Common myeloid progenitor, CD34-positive (primary cell): ENCODE measurements at regions of chr5 and their contacts with region 1.

Region 1: DNA sequence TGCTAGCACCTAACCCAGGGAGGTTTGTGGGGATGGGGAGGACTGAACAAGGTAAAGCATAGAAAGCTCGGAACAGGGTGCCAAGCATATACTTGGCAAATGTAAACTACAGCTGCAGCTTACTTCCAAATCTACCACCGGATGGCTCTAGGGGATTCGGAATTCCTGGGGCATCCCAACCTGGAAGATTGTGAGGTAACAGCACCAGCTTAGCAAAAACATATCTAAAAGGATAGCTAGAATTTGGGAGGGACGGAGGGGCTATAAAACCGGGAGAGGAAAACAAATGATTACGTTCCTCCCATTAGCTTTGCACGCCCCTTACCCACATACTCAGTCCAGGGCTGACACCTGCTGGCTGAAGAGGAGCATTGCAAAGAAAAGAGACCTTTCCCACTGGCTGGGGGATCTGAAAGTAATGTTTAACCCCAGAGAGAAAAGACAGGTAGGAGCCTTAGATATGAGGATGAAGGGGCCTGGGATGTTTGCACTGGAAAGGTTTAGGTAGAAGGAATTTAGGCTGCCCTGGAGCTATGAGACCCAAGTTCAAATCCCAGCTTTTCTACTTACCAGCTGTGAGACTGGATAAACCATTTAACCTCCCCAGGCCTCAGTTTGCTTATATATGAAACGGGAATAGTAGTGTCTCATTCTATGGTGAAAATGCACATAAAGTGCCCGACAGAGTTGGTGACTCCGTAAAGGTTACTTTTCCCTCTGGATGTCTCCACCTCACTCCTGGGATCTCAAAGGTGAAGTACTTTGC is 73.6 kb downstream of the FAM114A2 start:
- DNase-seq: peak; percentile 52 to 76 (median 63)
- H3K4me3 ChIP-seq: no peak overlapping the region
- H3K27ac ChIP-seq: no peak overlapping the region
- H3K4me1 ChIP-seq: peaks cover 0 to 14% (median 9%) of the 10 kb centered on the region in 4 experiments
- H3K27me3 ChIP-seq: peaks cover 0 to 8% (median 0%) of the 10 kb centered on the region in 5 experiments

Region 2: DNA sequence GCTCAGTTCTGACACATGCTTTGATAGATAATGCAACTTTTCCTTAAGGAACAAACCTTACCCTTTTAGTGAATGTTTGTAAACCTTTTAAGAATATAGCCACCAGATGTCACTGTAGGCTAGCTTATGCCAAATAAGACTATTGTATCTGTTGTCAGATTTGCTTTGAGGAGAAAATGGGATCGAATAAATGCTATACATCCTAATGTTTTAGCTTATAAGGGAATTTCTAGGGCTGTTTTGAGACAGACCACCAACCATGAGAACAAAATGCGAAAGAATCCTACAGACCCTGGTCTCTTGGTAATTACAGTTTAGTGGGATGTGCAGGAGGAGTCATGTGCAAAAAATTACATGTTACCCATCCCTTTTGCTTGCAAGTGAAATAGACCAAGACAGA is 1432.3 kb before region 1 on chr5:
- CTCF ChIA-PET with region 1: interaction called, 39 read pairs
- POLR2A ChIA-PET with region 1: no interaction called
- DNase-seq: peak; percentile 45 to 67 (median 60)
- H3K4me3 ChIP-seq: no peak overlapping the region
- H3K27ac ChIP-seq: no peak overlapping the region
- H3K4me1 ChIP-seq: no peaks in the 10 kb centered on the region
- H3K27me3 ChIP-seq: no peaks in the 10 kb centered on the region

Region 3: DNA sequence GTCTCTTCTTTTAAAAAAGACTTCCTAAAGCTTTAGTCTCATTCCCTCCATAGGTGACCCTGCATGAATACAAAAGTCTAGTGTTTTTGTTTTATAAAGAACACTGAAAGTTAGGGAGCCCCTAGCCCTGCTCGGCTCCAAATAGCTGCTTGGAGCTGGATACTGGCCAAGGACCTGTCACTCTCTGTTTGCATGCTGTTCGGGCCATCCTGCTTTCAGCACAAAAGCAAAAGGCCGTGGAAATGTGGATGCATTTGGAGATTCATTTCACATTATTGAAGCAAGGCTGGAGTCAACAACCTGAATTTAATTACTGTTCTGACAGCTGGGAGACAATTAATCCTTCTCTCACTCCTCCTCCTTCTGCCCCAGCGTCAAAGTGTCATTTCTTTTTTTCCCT is 1408.3 kb before region 1 on chr5:
- CTCF ChIA-PET with region 1: interaction called, 11 read pairs
- POLR2A ChIA-PET with region 1: no interaction called
- DNase-seq: no peak
- H3K4me3 ChIP-seq: no peak overlapping the region
- H3K27ac ChIP-seq: no peak overlapping the region
- H3K4me1 ChIP-seq: no peaks in the 10 kb centered on the region
- H3K27me3 ChIP-seq: peaks cover 0 to 2% (median 0%) of the 10 kb centered on the region in 5 experiments

Region 4: DNA sequence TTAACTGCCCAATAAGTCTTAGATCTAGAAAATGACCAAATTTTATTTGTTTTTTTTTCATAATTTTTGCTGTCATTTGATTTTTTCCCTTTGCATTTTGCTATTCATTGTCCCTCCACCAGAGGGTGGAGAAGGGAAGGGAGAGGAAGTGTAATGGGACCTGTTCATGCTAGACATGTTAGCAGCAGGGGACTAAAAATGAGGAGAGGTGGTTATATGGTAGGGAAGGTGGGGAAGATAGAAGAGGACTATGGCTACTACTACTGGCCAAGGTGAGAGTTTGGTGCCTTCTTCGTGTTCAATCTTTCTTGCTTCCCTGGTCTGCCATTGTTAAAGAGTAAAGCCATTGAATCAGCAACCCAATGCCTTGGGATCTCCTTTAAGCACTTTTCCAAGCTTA is 468.2 kb before region 1 on chr5:
- CTCF ChIA-PET with region 1: interaction called, 116 read pairs
- POLR2A ChIA-PET with region 1: interaction called, 3 read pairs
- DNase-seq: peak; percentile 22 to 54 (median 49)
- H3K4me3 ChIP-seq: no peak overlapping the region
- H3K27ac ChIP-seq: no peak overlapping the region
- H3K4me1 ChIP-seq: peaks cover 0 to 6% (median 0%) of the 10 kb centered on the region in 4 experiments
- H3K27me3 ChIP-seq: peaks cover 0 to 15% (median 6%) of the 10 kb centered on the region in 5 experiments

Region 5: GRCh38 chr5:153952893-153953292 is 12.2 kb before region 1 on chr5:
- CTCF ChIA-PET with region 1: interaction called, 12 read pairs
- POLR2A ChIA-PET with region 1: no interaction called
- DNase-seq: no peak
- H3K4me3 ChIP-seq: no peak overlapping the region
- H3K27ac ChIP-seq: no peak overlapping the region
- H3K4me1 ChIP-seq: no peaks in the 10 kb centered on the region
- H3K27me3 ChIP-seq: peaks cover 0 to 6% (median 1%) of the 10 kb centered on the region in 5 experiments

Region 6: GRCh38 chr5:153998010-153998409 is 32.9 kb after region 1 on chr5:
- CTCF ChIA-PET with region 1: no interaction called
- POLR2A ChIA-PET with region 1: no interaction called
- DNase-seq: no peak
- H3K4me3 ChIP-seq: no peak overlapping the region
- H3K27ac ChIP-seq: no peak overlapping the region
- H3K4me1 ChIP-seq: no peaks in the 10 kb centered on the region
- H3K27me3 ChIP-seq: no peaks in the 10 kb centered on the region